ENCODE measurements at regions of chr12 and their contacts with region 1.

Region 1: GRCh38 chr12:43728117-43728516 is 30.5 kb downstream of the PUS7L start:
- DNase-seq: no peak
- H3K4me3 ChIP-seq: no peak overlapping the region
- H3K4me3 Mint-ChIP-seq: no peak overlapping the region
- H3K27ac Mint-ChIP-seq: no peak overlapping the region
- H3K4me1 ChIP-seq: no peaks in the 10 kb centered on the region
- H3K4me1 Mint-ChIP-seq: no peaks in the 10 kb centered on the region
- H3K27me3 ChIP-seq: no peaks in the 10 kb centered on the region
- H3K27me3 Mint-ChIP-seq: no peaks in the 10 kb centered on the region
- CTCF ChIP-seq: peak in 1 of 2 experiments; percentile 45

Region 2: GRCh38 chr12:43349863-43350262 is 378.3 kb before region 1 on chr12:
- CTCF ChIA-PET with region 1: no interaction called
- POLR2A ChIA-PET with region 1: no interaction called
- intact Hi-C with region 1: loop called (anchors 1 kb)
- DNase-seq: no peak
- H3K4me3 ChIP-seq: no peak overlapping the region
- H3K4me3 Mint-ChIP-seq: no peak overlapping the region
- H3K27ac Mint-ChIP-seq: no peak overlapping the region
- H3K4me1 ChIP-seq: no peaks in the 10 kb centered on the region
- H3K4me1 Mint-ChIP-seq: no peaks in the 10 kb centered on the region
- H3K27me3 ChIP-seq: no peaks in the 10 kb centered on the region
- H3K27me3 Mint-ChIP-seq: peaks cover 5% of the 10 kb centered on the region
- CTCF ChIP-seq: peak; percentile 25 to 62

Region 3: GRCh38 chr12:43444940-43445564 is 283.1 kb before region 1 on chr12:
- CTCF ChIA-PET with region 1: no interaction called
- POLR2A ChIA-PET with region 1: no interaction called
- intact Hi-C with region 1: loop called (anchors 2 kb)
- DNase-seq: peak; percentile 58 to 75
- H3K4me3 ChIP-seq: no peak overlapping the region
- H3K4me3 Mint-ChIP-seq: no peak overlapping the region
- H3K27ac Mint-ChIP-seq: no peak overlapping the region
- H3K4me1 ChIP-seq: no peaks in the 10 kb centered on the region
- H3K4me1 Mint-ChIP-seq: no peaks in the 10 kb centered on the region
- H3K27me3 ChIP-seq: no peaks in the 10 kb centered on the region
- H3K27me3 Mint-ChIP-seq: peaks cover 4% of the 10 kb centered on the region
- CTCF ChIP-seq: peak; percentile 85 to 88

Region 4: DNA sequence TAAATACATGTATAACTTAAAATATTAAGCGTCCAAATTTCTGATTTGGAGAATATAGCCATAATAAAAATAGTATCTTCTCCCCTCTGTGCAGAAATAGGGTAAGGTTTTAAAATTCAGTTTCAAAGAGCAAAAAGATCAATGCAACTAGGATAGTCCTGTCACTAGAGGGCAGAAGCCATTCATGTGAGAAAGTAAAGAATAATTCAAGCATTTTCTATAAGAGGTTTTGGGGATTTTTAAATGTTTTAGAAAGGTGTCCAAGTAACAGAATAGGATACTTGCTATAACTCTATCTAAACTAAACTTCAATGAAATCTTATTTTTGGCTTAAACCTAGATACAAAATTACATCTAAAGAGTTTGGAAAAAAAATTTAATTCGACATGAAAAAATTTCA is 226.4 kb before region 1 on chr12:
- CTCF ChIA-PET with region 1: no interaction called
- POLR2A ChIA-PET with region 1: no interaction called
- intact Hi-C with region 1: loop called (anchors 1 kb)
- DNase-seq: peak in 1 of 2 experiments; percentile 12
- H3K4me3 ChIP-seq: no peak overlapping the region
- H3K4me3 Mint-ChIP-seq: no peak overlapping the region
- H3K27ac Mint-ChIP-seq: no peak overlapping the region
- H3K4me1 ChIP-seq: no peaks in the 10 kb centered on the region
- H3K4me1 Mint-ChIP-seq: no peaks in the 10 kb centered on the region
- H3K27me3 ChIP-seq: no peaks in the 10 kb centered on the region
- H3K27me3 Mint-ChIP-seq: peaks cover 2% of the 10 kb centered on the region
- CTCF ChIP-seq: peak; percentile 42 to 60

Region 5: DNA sequence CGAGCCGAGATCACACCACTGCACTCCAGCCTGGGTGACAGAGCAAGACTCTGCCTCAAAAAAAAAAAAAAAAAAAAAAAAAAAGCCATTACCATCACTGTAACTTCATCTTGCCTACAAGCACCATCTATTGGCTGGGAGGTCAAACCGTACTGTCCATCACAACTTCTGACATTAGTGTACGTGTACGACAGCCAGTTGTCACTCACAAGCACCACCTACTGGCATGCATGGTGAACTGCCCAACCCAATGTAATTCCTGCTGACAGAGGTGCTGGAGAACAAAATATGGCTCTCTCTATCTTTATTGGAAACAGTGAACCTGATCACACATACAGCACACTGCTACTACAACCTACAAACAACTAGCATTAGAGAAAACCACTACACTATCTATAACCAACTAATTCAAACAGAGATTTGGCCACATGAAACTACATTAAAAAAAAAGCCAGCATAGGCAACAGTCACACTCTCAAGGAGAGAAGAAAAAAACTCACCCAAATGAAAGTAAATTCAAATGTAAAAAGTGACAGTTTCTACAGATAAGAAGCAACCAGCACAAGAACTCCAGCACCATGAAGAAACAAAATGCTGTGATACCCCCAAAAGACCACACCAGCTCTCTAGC is 51.8 kb before region 1 on chr12:
- CTCF ChIA-PET with region 1: no interaction called
- POLR2A ChIA-PET with region 1: no interaction called
- intact Hi-C with region 1: loop called (anchors 5 kb)
- DNase-seq: peak; percentile 53 to 54
- H3K4me3 ChIP-seq: no peak overlapping the region
- H3K4me3 Mint-ChIP-seq: no peak overlapping the region
- H3K27ac Mint-ChIP-seq: peak overlapping the region; percentile 82
- H3K4me1 ChIP-seq: peaks cover 20% of the 10 kb centered on the region
- H3K4me1 Mint-ChIP-seq: peaks cover 17% of the 10 kb centered on the region
- H3K27me3 ChIP-seq: no peaks in the 10 kb centered on the region
- H3K27me3 Mint-ChIP-seq: peaks cover 4% of the 10 kb centered on the region
- CTCF ChIP-seq: peak; percentile 49 to 60